ENCODE measurements at regions of chr2 and their contacts with region 1.

Region 1: GRCh38 chr2:108988796-108989713 is at the start of gene EDAR:
- DNase-seq: peak; percentile 77
- ATAC-seq: peak; percentile 74
- H3K4me3 Mint-ChIP-seq: peak within 1 kb of the TSS; percentile 74
- H3K27ac Mint-ChIP-seq: peak within 1 kb of the TSS; percentile 71
- H3K4me1 Mint-ChIP-seq: peaks cover 55% of the 10 kb centered on the region
- H3K27me3 Mint-ChIP-seq: no peaks in the 10 kb centered on the region
- total RNA-seq, gene EDAR: 0.78 to 0.81 TPM

Region 2: GRCh38 chr2:108786354-108787199 is 202.5 kb before region 1 on chr2 and contains the start of gene CCDC138:
- CTCF ChIA-PET with region 1: no interaction called
- POLR2A ChIA-PET with region 1: no interaction called
- intact Hi-C with region 1: loop called (anchors 2 to 5 kb)
- DNase-seq: peak; percentile 96
- ATAC-seq: peak; percentile 98
- H3K4me3 Mint-ChIP-seq: peak within 1 kb of the TSS; percentile 76
- H3K27ac Mint-ChIP-seq: peak within 1 kb of the TSS; percentile 95
- H3K4me1 Mint-ChIP-seq: peaks cover 14% of the 10 kb centered on the region
- H3K27me3 Mint-ChIP-seq: no peaks in the 10 kb centered on the region
- total RNA-seq, gene CCDC138: 14.3 to 15.3 TPM

Region 3: DNA sequence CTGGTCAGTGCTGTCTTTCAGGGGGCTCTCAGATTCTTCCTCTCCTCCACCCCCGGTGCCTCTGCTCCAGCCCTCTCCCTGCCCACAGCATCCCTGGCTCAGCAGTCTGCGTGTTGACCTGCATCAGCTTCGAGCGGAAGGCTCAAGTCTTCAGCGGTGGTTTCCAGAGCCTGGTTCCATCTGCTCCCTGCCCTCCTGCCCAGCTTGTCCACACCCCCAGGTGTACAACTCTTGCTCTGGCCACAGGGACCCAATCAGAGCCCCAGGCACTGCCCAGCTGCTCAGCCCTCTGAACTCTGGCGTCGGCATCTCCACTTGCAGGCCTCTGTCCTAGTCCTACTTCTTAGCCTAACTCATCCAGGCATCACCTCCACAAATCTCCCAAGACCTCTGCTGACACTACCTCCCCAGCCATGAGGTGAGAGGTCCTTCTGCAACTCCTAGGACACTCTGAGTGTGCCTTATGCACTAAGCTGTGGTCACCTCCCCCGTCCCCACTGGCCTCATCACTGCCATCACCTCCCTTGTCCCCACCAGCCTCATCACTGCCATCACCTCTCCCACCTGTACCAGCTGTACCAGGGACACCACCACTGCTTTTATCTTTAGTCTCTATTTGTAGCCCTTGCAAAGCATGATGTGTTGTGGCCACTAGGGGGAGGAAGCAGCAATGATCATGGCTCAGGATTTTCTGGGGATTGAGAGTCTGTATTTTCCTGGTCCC is 61.0 kb before region 1 on chr2:
- CTCF ChIA-PET with region 1: interaction called, 58 read pairs
- POLR2A ChIA-PET with region 1: no interaction called
- intact Hi-C with region 1: loop called (anchors 1 kb)
- DNase-seq: peak; percentile 64
- ATAC-seq: peak; percentile 68
- H3K4me3 Mint-ChIP-seq: no peak overlapping the region
- H3K27ac Mint-ChIP-seq: no peak overlapping the region
- H3K4me1 Mint-ChIP-seq: peaks cover 4% of the 10 kb centered on the region
- H3K27me3 Mint-ChIP-seq: no peaks in the 10 kb centered on the region

Region 4: GRCh38 chr2:108960006-108960405 is 29.0 kb before region 1 on chr2:
- CTCF ChIA-PET with region 1: interaction called, 15 read pairs
- POLR2A ChIA-PET with region 1: interaction called, 9 read pairs
- intact Hi-C with region 1: no loop called
- DNase-seq: peak; percentile 42
- ATAC-seq: peak; percentile 27
- H3K4me3 Mint-ChIP-seq: no peak overlapping the region
- H3K27ac Mint-ChIP-seq: peak overlapping the region; percentile 38
- H3K4me1 Mint-ChIP-seq: peaks cover 81% of the 10 kb centered on the region
- H3K27me3 Mint-ChIP-seq: no peaks in the 10 kb centered on the region

Region 5: DNA sequence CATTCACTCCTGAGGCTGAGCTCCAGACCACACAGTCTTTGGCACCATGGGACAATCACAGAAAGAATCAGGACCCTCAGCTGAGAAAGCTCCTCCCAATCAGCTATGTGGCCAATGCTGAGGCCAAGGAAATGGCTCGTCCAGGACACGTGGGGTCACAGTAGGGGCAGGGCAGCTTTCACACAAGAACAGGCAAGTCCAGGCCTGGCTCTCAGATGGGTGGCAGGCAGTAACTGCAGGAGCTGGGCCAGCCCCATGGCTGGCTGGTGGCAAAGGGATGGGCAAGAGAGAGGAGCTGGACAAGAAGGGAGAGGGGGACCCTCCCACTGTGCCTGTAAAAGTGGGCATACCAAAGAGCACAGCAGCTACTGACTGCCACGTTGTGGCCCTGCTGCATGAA is 12.1 kb after region 1 on chr2:
- CTCF ChIA-PET with region 1: interaction called, 12 read pairs
- POLR2A ChIA-PET with region 1: no interaction called
- intact Hi-C with region 1: no loop called
- DNase-seq: no peak
- ATAC-seq: no peak
- H3K4me3 Mint-ChIP-seq: no peak overlapping the region
- H3K27ac Mint-ChIP-seq: no peak overlapping the region
- H3K4me1 Mint-ChIP-seq: peaks cover 8% of the 10 kb centered on the region
- H3K27me3 Mint-ChIP-seq: no peaks in the 10 kb centered on the region

Region 6: GRCh38 chr2:109382951-109383350 is 393.9 kb after region 1 on chr2:
- CTCF ChIA-PET with region 1: no interaction called
- POLR2A ChIA-PET with region 1: no interaction called
- intact Hi-C with region 1: no loop called
- DNase-seq: no peak
- ATAC-seq: no peak
- H3K4me3 Mint-ChIP-seq: no peak overlapping the region
- H3K27ac Mint-ChIP-seq: no peak overlapping the region
- H3K4me1 Mint-ChIP-seq: no peaks in the 10 kb centered on the region
- H3K27me3 Mint-ChIP-seq: no peaks in the 10 kb centered on the region

Measured in activated CD4-positive, alpha-beta T cell treated with anti-CD3 and anti-CD28 coated beads for 36 hours (primary cell).